Activated CD4-positive, alpha-beta T cell treated with anti-CD3 and anti-CD28 coated beads, Interleukin-2, amount 10 ng/mL, durations not matched to agents 24 days and 14 days (primary cell): ENCODE measurements at regions of chr14 and their contacts with region 1.

Region 1: GRCh38 chr14:95265106-95266094 is 54.3 kb downstream of the CLMN start:
- DNase-seq: peak; percentile 80
- H3K4me3 Mint-ChIP-seq: peak overlapping the region; percentile 8
- H3K27ac Mint-ChIP-seq: peak overlapping the region; percentile 25
- H3K4me1 Mint-ChIP-seq: peaks cover 34% of the 10 kb centered on the region
- H3K27me3 Mint-ChIP-seq: peaks cover 1% of the 10 kb centered on the region

Region 2: GRCh38 chr14:93970549-93970946 is 1294.9 kb before region 1 on chr14:
- intact Hi-C with region 1: loop called (anchors 10 kb)
- DNase-seq: peak; percentile 85
- H3K4me3 Mint-ChIP-seq: peak overlapping the region; percentile 83
- H3K27ac Mint-ChIP-seq: peak overlapping the region; percentile 98
- H3K4me1 Mint-ChIP-seq: peaks cover 70% of the 10 kb centered on the region
- H3K27me3 Mint-ChIP-seq: no peaks in the 10 kb centered on the region

Region 3: GRCh38 chr14:95157327-95158189 is 107.8 kb before region 1 on chr14 and contains the start of gene DICER1:
- intact Hi-C with region 1: loop called (anchors 2 kb)
- DNase-seq: peak; percentile 99
- H3K4me3 Mint-ChIP-seq: peak within 1 kb of the TSS; percentile 91
- H3K27ac Mint-ChIP-seq: peak within 1 kb of the TSS; percentile 97
- H3K4me1 Mint-ChIP-seq: peaks cover 30% of the 10 kb centered on the region
- H3K27me3 Mint-ChIP-seq: no peaks in the 10 kb centered on the region
- total RNA-seq, gene DICER1: 74.4 and 77.0 TPM in 2 replicates

Region 4: GRCh38 chr14:95314616-95315482 is 49.4 kb after region 1 on chr14:
- intact Hi-C with region 1: loop called (anchors 2 kb)
- DNase-seq: peak; percentile 60
- H3K4me3 Mint-ChIP-seq: no peak overlapping the region
- H3K27ac Mint-ChIP-seq: peak overlapping the region; percentile 10
- H3K4me1 Mint-ChIP-seq: peaks cover 16% of the 10 kb centered on the region
- H3K27me3 Mint-ChIP-seq: peaks cover 28% of the 10 kb centered on the region

Region 5: DNA sequence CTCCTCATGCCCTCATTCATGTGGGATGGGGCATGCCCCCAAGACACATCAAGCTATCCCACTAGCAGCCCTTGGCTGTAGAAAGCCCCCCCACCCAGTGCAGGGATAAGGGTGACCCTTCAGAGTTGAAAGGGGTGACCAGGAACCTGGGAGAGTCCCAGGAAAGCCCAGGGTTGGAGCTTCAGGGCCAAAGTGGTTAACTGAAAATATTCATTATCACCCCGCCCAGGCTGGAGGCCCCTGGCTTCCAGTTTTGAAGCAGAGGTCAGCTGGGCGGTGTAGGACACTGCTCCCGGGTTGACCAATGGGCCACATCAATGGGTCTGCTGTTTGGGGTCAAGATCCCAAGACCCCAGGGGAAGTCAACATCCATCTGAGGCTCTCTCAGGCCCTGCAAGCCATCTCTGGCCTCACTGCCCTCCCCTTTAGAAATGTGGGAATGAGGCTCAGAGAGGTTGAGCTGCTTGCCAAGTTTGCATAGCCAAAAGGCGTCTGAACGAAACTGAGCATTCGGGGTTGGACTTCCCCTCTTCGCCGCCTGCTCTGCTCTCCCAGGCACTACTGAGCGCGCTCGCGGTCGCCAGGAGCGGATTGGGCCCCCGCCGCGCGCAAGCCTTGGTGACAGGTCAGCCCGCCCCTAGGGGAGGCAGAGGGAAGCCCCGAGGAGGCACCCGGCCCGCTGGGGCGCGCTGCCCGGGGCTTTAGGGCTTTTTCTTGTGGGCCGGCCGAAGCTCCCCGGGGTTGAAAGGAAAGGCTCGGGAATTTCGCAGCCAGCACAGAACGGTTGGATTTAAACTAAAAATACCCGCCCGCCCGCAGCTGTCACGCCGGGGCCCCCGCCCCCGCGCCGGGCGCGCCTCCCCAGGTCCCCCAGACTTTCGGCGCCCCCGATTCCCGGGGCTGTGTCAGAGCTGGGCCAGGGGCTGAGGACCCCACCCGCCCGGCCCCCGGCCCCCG is 250.5 kb after region 1 on chr14:
- intact Hi-C with region 1: loop called (anchors 5 kb)
- DNase-seq: peak; percentile 96
- H3K4me3 Mint-ChIP-seq: peak overlapping the region; percentile 95
- H3K27ac Mint-ChIP-seq: peak overlapping the region; percentile 90
- H3K4me1 Mint-ChIP-seq: peaks cover 60% of the 10 kb centered on the region
- H3K27me3 Mint-ChIP-seq: no peaks in the 10 kb centered on the region